ENCODE measurements at regions of chrX and their contacts with region 1.

Region 1: DNA sequence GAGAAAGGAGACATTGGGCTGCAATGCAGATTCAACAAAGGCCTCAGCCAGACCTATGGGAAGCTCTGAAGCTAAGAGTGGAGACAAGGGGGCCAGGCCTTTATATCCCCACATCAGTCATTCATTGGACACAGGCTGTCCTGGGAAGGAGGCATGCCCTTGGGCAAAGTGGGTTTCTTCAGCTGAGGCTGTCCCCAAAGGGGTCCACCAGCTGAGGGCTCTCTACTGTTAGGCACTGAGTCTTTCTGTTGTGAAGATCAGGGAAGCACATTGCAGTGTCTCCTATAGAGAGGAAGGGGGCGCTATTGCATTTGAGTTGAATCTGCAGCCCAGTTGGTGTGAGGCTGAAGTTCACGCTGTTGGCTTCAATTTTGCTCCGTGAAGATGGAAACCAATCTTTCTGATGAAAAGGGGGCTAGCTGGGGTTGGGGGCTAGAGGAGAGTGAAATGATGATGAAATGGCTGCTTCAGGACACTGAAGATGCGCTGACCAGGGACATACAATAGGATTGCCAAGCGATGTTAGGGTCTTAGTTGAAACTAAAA is 48.0 kb downstream of the SLC25A5 start:
- DNase-seq: peak in 1 of 2 donors; percentile 19
- ATAC-seq: peak; percentile 66 to 89 (median 80)
- H3K4me3 ChIP-seq: no peak overlapping the region
- H3K27ac ChIP-seq: no peak overlapping the region
- H3K4me1 ChIP-seq: no peaks in the 10 kb centered on the region
- H3K27me3 ChIP-seq: peaks cover 0 to 2% (median 0%) of the 10 kb centered on the region in 7 donors
- CTCF ChIP-seq: peak; percentile 44 to 77 (median 71)

Region 2: GRCh38 chrX:118652718-118653117 is 863.5 kb before region 1 on chrX:
- intact Hi-C with region 1: no loop called
- DNase-seq: no peak
- ATAC-seq: no peak
- H3K4me3 ChIP-seq: no peak overlapping the region
- H3K27ac ChIP-seq: no peak overlapping the region
- H3K4me1 ChIP-seq: peaks cover 0 to 6% (median 0%) of the 10 kb centered on the region in 9 donors
- H3K27me3 ChIP-seq: peaks cover 0 to 9% (median 0%) of the 10 kb centered on the region in 7 donors
- CTCF ChIP-seq: no peak

Region 3: DNA sequence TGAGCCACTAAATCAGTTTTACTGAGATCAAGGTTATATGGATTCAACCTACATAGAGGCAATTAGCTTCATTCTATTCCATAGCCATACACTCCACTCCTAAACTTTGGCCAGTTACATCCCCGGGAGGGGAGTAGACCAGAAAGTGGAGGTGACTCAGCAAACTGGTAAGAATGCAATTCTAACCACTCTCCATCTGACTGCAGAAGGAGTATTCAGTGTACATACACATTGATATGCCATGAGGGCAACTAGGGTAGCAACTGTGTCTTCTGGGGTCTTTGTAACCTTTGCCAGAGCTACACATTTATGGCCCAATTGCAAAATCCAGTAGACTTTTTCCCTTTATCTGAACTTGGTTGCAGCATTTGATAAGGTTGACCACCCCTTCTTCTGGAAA is 109.5 kb before region 1 on chrX:
- intact Hi-C with region 1: no loop called
- DNase-seq: no peak
- ATAC-seq: no peak
- H3K4me3 ChIP-seq: no peak overlapping the region
- H3K27ac ChIP-seq: no peak overlapping the region
- H3K4me1 ChIP-seq: no peaks in the 10 kb centered on the region
- H3K27me3 ChIP-seq: no peaks in the 10 kb centered on the region
- CTCF ChIP-seq: no peak

Region 4: DNA sequence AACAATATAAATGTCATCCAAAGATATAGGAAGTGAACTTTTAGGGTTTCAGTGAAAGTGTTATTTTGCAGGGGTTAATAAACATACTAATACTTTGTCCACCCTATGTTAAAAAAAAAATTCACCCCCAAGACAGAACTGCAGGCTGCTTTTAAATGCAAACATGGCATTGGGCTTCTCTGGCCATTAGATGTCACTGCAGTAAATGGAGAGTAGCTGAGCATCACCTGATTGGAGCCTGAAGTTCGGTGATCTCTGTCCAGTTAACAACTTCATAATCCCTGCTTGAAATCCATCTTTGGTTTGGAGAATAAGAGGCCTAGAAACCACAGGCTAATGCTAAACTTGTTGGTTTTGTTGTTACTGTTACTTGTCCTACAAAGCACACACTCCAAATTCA is 98.4 kb before region 1 on chrX:
- intact Hi-C with region 1: loop called in 2 of 10 experiments (anchors 5 kb)
- DNase-seq: no peak
- ATAC-seq: no peak
- H3K4me3 ChIP-seq: no peak overlapping the region
- H3K27ac ChIP-seq: no peak overlapping the region
- H3K4me1 ChIP-seq: no peaks in the 10 kb centered on the region
- H3K27me3 ChIP-seq: no peaks in the 10 kb centered on the region
- CTCF ChIP-seq: peak in 6 of 9 donors; percentile 17 to 38 (median 28)

Region 5: DNA sequence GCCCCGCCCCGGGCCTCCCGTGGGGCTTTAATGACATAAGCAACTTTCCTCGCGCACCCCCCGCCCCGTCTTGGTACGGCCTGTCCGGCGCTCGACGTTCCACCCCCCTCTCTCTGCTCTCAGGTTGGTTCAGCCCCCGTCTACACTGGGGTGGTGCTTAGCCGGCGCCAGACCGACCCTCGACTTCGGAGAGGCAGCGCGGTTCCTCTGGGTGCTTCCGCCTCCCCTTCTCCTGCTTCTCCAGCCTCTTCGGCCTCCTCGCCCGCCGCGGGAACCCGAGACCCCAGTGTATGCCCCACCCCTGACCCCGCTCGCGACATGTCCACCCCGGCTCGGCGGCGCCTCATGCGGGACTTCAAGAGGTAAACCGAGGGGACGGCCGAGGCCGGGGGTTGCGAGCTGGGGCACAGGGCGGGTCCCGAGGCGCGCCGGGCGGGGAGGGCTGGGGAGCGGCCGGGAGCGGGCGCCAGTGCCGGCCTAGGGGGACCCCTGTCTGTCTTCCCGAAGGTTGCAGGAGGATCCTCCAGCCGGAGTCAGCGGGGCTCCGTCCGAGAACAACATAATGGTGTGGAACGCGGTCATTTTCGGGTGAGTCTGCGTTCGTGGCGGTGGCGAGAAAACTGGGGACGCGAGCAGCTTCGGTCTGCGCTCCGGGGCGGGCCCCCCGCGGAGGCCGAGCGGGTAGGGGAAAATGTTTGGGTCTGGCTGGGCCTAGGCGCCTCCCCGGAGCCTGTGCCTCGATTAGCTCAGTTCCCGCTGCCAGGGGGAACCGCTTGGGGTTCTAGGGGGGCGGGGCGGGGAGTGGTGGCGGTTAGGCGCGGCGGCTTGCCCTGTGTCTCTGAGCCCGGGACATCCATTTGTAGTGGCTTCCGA is 58.4 kb after region 1 on chrX and contains the start of gene UBE2A:
- intact Hi-C with region 1: loop called in 1 of 10 experiments (anchors 10 kb)
- DNase-seq: peak; percentile 90 to 93
- ATAC-seq: peak; percentile 94 to 98 (median 96)
- H3K4me3 ChIP-seq: peak within 1 kb of the TSS; percentile 49 to 82 (median 74)
- H3K27ac ChIP-seq: peak within 1 kb of the TSS; percentile 85 to 98 (median 93)
- H3K4me1 ChIP-seq: peaks cover 0 to 30% (median 17%) of the 10 kb centered on the region in 9 donors
- H3K27me3 ChIP-seq: no peaks in the 10 kb centered on the region
- CTCF ChIP-seq: peak in 7 of 9 donors; percentile 39 to 62 (median 48)
- total RNA-seq, gene UBE2A: 64.6 to 77.7 (median 67.8) TPM

Region 6: GRCh38 chrX:119604766-119605463 is 88.7 kb after region 1 on chrX:
- intact Hi-C with region 1: no loop called
- DNase-seq: no peak
- ATAC-seq: peak in 1 of 8 donors; percentile 5
- H3K4me3 ChIP-seq: peak overlapping the region in 9 of 10 donors; percentile 60 to 84 (median 71)
- H3K27ac ChIP-seq: peak overlapping the region in 3 of 10 donors; percentile 92 to 94 (median 94)
- H3K4me1 ChIP-seq: peaks cover 0 to 8% (median 0%) of the 10 kb centered on the region in 9 donors
- H3K27me3 ChIP-seq: peaks cover 0 to 9% (median 0%) of the 10 kb centered on the region in 7 donors
- CTCF ChIP-seq: no peak